Heart left ventricle (tissue), 16 donors: ENCODE measurements at regions of chr6 and their contacts with region 1.

Region 1: GRCh38 chr6:162727309-162728182 is at the starts of genes PACRG and PRKN:
- DNase-seq: peak; percentile 99
- ATAC-seq: peak; percentile 96 to 99 (median 99)
- H3K4me3 ChIP-seq: peak within 1 kb of the TSS; percentile 86 to 94 (median 90)
- H3K27ac ChIP-seq: peak within 1 kb of the TSS; percentile 88 to 98 (median 95)
- H3K4me1 ChIP-seq: peaks cover 0 to 39% (median 13%) of the 10 kb centered on the region in 12 donors
- H3K27me3 ChIP-seq: no peaks in the 10 kb centered on the region
- CTCF ChIP-seq: no peak
- POLR2A ChIP-seq: peak; percentile 96 to 99
- total RNA-seq, gene PACRG: 3.2 to 83.3 (median 11.9) TPM
- total RNA-seq, gene PRKN: 19.1 to 32.5 (median 22.5) TPM

Region 2: DNA sequence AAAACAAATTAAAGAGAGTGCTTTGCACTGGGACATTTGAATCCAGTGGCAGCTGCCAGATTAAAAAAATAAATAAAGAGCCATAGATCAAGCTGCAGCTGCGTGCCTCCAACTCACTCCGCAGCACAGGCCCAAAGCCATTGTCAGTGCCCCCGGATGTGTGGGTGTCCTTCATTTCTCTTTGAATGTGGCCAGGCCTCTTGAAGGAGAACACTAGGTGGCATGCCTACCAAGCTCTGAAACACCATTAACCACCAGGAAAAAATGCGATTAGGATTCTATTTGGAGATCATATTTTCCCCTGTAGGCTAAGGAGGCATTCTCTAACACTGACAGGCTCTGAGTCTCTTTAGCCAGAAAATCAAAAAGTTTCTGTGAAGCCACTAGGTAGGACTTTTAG is 549.8 kb before region 1 on chr6:
- intact Hi-C with region 1: loop called in 2 of 10 experiments (anchors 10 kb)
- DNase-seq: peak in 4 of 5 donors; percentile 36 to 43 (median 38)
- ATAC-seq: peak; percentile 76 to 92 (median 84)
- H3K4me3 ChIP-seq: no peak overlapping the region
- H3K27ac ChIP-seq: peak overlapping the region in 10 of 12 donors; percentile 11 to 78 (median 66)
- H3K4me1 ChIP-seq: peaks cover 0 to 20% (median 9%) of the 10 kb centered on the region in 12 donors
- H3K27me3 ChIP-seq: no peaks in the 10 kb centered on the region
- CTCF ChIP-seq: peak in 11 of 12 donors; percentile 15 to 63 (median 53)
- POLR2A ChIP-seq: no peak

Region 3: GRCh38 chr6:162385980-162386379 is 341.6 kb before region 1 on chr6:
- intact Hi-C with region 1: loop called in 1 of 10 experiments (anchors 10 kb)
- DNase-seq: no peak
- ATAC-seq: peak in 3 of 4 donors; percentile 41 to 63 (median 53)
- H3K4me3 ChIP-seq: no peak overlapping the region
- H3K27ac ChIP-seq: peak overlapping the region in 4 of 12 donors; percentile 48 to 79 (median 64)
- H3K4me1 ChIP-seq: peaks cover 0 to 40% (median 8%) of the 10 kb centered on the region in 12 donors
- H3K27me3 ChIP-seq: no peaks in the 10 kb centered on the region
- CTCF ChIP-seq: no peak
- POLR2A ChIP-seq: no peak

Region 4: DNA sequence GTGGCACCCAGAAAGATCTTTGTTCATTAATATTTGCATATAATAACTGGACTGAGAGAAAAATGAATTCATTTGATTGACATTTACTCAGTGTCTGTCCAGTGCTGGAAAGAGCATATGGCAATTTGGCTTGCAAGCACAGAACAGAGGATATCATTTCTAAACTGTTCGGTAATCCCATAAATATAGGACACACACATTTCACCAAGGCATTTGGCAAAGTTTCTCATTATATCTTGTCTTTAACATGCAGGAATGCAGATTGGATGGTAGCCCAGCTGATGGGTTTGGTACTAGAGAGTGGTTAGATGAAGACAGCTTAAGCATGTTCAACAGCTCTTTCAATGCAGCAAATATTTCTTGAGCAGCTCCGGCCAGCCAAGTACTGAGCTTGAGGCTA is 259.2 kb before region 1 on chr6:
- intact Hi-C with region 1: loop called in 4 of 10 experiments (anchors 5 to 10 kb)
- DNase-seq: peak in 4 of 5 donors; percentile 57 to 72 (median 64)
- ATAC-seq: peak; percentile 83 to 94 (median 90)
- H3K4me3 ChIP-seq: no peak overlapping the region
- H3K27ac ChIP-seq: peak overlapping the region in 11 of 12 donors; percentile 47 to 89 (median 82)
- H3K4me1 ChIP-seq: peaks cover 0 to 13% (median 0%) of the 10 kb centered on the region in 12 donors
- H3K27me3 ChIP-seq: no peaks in the 10 kb centered on the region
- CTCF ChIP-seq: no peak
- POLR2A ChIP-seq: no peak

Region 5: DNA sequence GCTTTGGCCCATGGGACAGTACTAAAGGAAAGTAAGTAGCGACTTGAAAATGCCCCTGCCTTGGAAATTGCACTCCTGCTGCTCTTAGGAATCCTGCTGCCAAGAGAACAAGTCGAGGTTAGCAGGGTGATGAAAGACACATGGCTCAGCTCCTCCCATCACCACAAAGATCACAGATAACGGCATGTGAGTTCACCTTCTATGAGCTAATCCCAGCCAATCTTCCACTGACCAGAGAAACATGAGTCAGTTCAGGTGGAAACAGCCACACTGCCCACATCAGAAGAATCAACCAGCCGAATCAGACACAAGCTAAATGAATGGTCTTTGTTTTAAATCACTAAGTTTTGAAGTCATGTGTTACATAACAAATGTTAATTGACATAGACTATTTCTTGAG is 106.3 kb before region 1 on chr6:
- intact Hi-C with region 1: loop called in 2 of 10 experiments (anchors 10 kb)
- DNase-seq: peak in 1 of 5 donors; percentile 31
- ATAC-seq: peak in 2 of 4 donors; percentile 71 to 73
- H3K4me3 ChIP-seq: no peak overlapping the region
- H3K27ac ChIP-seq: no peak overlapping the region
- H3K4me1 ChIP-seq: peaks cover 0 to 10% (median 0%) of the 10 kb centered on the region in 12 donors
- H3K27me3 ChIP-seq: no peaks in the 10 kb centered on the region
- CTCF ChIP-seq: no peak
- POLR2A ChIP-seq: no peak

Region 6: DNA sequence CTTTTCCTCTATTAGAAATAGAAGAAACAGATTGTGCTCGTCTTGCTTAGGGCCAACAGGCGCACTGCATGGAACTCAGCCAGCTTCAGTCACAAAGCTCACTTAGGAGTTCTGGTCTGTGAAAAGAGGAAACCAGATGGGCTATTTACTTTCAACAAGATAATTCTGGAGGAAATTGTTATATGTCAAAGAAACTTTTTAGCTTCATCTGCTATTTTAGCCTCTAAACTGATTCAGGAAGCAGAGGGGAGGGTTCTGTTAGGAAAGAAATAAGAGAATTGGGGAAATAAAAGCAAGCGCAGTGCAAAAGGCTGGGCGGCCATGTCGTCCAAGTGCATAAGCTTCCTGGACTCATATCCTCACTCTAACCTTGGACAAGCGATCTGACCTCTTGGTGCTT is 21.3 kb before region 1 on chr6:
- intact Hi-C with region 1: loop called in 1 of 10 experiments (anchors 2 kb)
- DNase-seq: peak; percentile 73 to 90 (median 82)
- ATAC-seq: peak; percentile 81 to 92 (median 88)
- H3K4me3 ChIP-seq: peak overlapping the region in 10 of 12 donors; percentile 2 to 43 (median 20)
- H3K27ac ChIP-seq: peak overlapping the region; percentile 62 to 86 (median 76)
- H3K4me1 ChIP-seq: peaks cover 4 to 29% (median 19%) of the 10 kb centered on the region in 12 donors
- H3K27me3 ChIP-seq: no peaks in the 10 kb centered on the region
- CTCF ChIP-seq: no peak
- POLR2A ChIP-seq: no peak